Dorsolateral prefrontal cortex (tissue), 120 donors: ENCODE measurements at regions of chr11 and their contacts with region 1.

Region 1: DNA sequence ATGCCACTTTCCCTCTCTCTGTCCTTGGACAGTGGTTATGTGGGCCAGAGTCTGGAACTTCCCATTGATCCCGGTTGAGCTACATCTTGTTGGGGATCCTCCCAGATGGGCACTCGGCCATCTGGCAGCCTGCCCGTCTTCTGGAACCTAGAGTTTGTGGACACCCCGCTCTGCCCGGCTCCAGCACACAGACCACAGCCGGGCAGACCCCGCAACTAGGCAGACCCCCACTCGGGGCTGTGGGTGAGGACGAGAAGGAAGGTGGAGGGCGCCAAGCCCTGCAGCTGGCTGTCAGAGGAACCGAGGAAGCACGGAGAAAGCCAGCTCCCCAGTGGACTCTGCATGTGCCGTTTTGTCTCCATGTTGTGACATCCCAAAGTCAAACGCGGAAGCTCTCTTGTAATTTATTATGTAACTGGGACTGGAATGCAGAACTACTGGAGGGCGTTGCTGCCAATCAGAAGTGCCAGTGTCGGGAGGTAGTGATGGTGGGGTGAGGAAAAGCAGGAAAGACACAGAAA is 207.7 kb downstream of the CEP164 start:
- DNase-seq: peak; percentile 69 to 94 (median 84)
- H3K4me3 ChIP-seq: peak overlapping the region; percentile 5 to 66 (median 42)
- H3K27ac ChIP-seq: peak overlapping the region; percentile 49 to 98 (median 93)
- H3K27me3 ChIP-seq: no peaks in the 10 kb centered on the region
- CTCF ChIP-seq: peak in 2 of 56 donors; percentile 6 to 7

Region 2: GRCh38 chr11:117497206-117497951 is 37.9 kb before region 1 on chr11:
- intact Hi-C with region 1: loop called (anchors 5 kb)
- DNase-seq: peak in 5 of 10 donors; percentile 35 to 65 (median 57)
- H3K4me3 ChIP-seq: peak overlapping the region in 3 of 59 donors; percentile 1 to 27 (median 8)
- H3K27ac ChIP-seq: peak overlapping the region; percentile 63 to 98 (median 90)
- H3K27me3 ChIP-seq: no peaks in the 10 kb centered on the region
- CTCF ChIP-seq: peak in 1 of 56 donors; percentile 17

Region 3: GRCh38 chr11:117807482-117808327 is 272.4 kb after region 1 on chr11:
- intact Hi-C with region 1: loop called in 1 of 2 experiments (anchors 5 kb)
- DNase-seq: peak; percentile 77 to 95 (median 84)
- H3K4me3 ChIP-seq: no peak overlapping the region
- H3K27ac ChIP-seq: no peak overlapping the region
- H3K27me3 ChIP-seq: no peaks in the 10 kb centered on the region
- CTCF ChIP-seq: peak; percentile 82 to 98 (median 94)